A549 (cell line): ENCODE measurements at regions of chr12 and their contacts with region 1.

Region 1: DNA sequence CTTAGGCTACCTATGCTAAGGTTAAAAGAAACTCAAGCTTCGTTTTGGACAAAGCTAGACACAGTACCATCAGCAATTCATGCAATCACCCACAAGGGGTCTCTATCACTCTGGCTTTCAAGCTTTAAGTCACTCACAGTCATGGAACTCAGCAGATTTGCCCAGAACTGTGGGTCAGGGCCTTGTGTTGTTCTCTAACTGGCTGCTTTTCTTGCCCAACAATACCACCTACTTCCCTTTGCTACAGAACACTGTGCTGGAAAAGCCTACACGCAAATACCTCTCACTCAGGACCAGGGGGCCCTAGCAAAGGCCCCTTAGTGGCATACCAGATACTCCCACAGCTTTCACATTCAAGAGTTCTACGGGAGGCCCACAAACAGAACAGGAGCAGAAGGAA is 9.1 kb downstream of the NEMP1 start:
- DNase-seq: peak; percentile 48 to 86
- ATAC-seq: peak; percentile 99
- H3K4me3 ChIP-seq: no peak overlapping the region
- H3K27ac ChIP-seq: peak overlapping the region in 1 of 2 experiments; percentile 68; a peak in 3 of 6 replicates
- H3K4me1 ChIP-seq: 0 out of 3 replicates have a peak, but pooled peaks cover 4% of the 10 kb centered on the region
- CTCF ChIP-seq: peak; percentile 94
- EP300 ChIP-seq: no peak
- POLR2A ChIP-seq: no peak
- RAD21 ChIP-seq: peak; percentile 94 to 97

Region 2: DNA sequence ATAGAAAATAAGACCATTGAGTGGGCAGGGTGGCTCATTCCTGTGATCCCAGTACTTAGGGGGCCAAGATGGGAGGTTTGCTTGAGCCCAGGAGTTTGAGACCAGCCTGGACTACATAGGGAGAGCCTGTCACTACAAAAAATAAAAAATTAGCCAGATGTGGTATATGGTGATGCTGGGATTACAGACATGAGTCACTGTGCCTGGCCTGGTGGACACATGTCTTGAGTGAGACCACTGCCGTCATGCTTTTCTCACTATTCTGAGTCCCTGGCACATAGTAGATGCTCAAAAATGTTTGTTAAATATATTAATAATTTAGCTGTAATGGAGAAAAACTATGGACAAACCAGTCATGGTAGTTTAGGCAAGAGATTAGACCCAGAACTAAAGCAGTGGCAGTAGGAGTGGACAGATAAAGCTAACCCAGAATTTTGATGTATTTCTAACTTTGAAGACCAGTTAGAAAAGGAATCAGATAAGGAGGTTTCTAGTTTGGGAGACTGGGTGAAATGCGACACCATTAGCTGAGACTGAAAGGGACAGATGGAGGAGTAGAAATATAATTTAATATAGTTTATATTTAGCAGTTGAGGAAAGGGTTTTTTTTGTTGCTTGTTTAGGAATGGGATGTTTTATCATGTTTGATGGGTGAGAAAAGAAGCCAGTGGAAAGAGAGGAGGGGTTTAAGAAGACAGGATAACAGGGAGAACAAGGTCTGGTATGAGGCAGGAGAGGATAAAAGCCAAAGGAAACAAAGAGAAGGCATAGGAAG is 374.0 kb before region 1 on chr12:
- CTCF ChIA-PET with region 1: no interaction called
- POLR2A ChIA-PET with region 1: no interaction called
- DNase-seq: no peak
- ATAC-seq: no peak
- H3K4me3 ChIP-seq: no peak overlapping the region
- H3K27ac ChIP-seq: no peak overlapping the region; a peak in 1 of 6 replicates
- H3K4me1 ChIP-seq: no peaks in the 10 kb centered on the region
- CTCF ChIP-seq: no peak
- EP300 ChIP-seq: no peak
- POLR2A ChIP-seq: no peak
- RAD21 ChIP-seq: no peak

Region 3: GRCh38 chr12:56931474-56931978 is 138.0 kb before region 1 on chr12:
- CTCF ChIA-PET with region 1: no interaction called
- POLR2A ChIA-PET with region 1: no interaction called
- DNase-seq: peak in 1 of 2 experiments; percentile 55
- ATAC-seq: peak in 1 of 2 experiments; percentile 39; a peak in 1 of 6 replicates
- H3K4me3 ChIP-seq: no peak overlapping the region
- H3K27ac ChIP-seq: peak overlapping the region; percentile 16 to 37; a peak in 1 of 6 replicates
- H3K4me1 ChIP-seq: peaks cover 17% of the 10 kb centered on the region
- CTCF ChIP-seq: no peak
- EP300 ChIP-seq: no peak
- POLR2A ChIP-seq: no peak
- RAD21 ChIP-seq: no peak

Region 4: GRCh38 chr12:57031138-57031725 is 38.3 kb before region 1 on chr12:
- CTCF ChIA-PET with region 1: interaction called, 12 read pairs
- POLR2A ChIA-PET with region 1: no interaction called
- DNase-seq: peak in 1 of 2 experiments; percentile 35
- ATAC-seq: peak in 1 of 2 experiments; percentile 47; a peak in 3 of 6 replicates
- H3K4me3 ChIP-seq: no peak overlapping the region
- H3K27ac ChIP-seq: peak overlapping the region in 1 of 2 experiments; percentile 37; a peak in 2 of 6 replicates
- H3K4me1 ChIP-seq: peaks cover 6% of the 10 kb centered on the region; the same call in 2 of the 3 replicates
- CTCF ChIP-seq: no peak
- EP300 ChIP-seq: no peak
- POLR2A ChIP-seq: no peak
- RAD21 ChIP-seq: no peak

Region 5: DNA sequence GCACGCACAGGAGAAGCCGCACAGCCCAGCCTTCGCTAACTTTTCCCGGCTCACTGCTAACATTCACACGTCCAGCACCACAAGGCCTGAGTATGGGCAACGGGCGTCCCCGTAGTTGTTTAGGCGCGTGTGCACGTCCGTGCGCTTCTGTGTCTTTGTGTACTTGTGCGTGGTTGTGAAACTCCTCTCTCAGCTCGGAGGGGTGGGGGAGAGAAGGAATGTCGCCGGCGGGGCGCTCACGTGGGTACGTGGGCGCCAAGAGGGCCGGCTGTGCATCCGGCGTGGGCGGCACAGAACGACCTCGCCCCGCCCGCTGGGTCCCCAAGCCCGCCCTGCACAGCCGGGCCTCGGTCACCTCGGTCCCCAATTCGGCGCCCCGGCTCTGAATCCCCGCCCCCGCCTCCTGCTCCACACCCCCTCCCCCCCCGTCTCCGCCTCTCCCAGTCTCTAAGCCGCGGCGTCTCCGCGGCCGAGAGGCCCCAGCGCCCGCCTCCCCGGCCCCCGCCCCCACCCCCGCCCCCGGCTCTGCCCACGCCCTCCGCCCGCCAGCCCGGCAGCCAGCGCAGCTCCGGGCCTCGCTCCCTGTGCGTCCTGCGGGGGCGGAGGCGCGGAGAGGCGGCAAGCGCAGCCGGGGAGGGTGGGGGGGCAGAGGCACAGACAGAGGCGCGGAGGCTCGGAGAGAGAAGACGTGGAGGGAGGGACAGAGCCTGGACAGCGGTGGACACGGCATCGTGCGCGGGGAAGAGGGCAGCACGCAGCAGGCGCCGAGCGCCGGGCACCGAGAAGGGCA is 19.1 kb after region 1 on chr12 and contains the start of gene NAB2:
- CTCF ChIA-PET with region 1: interaction called, 152 read pairs
- POLR2A ChIA-PET with region 1: interaction called, 24 read pairs
- DNase-seq: peak; percentile 89 to 97
- ATAC-seq: peak; percentile 48 to 71
- H3K4me3 ChIP-seq: peak within 1 kb of the TSS; percentile 89
- H3K27ac ChIP-seq: peak within 1 kb of the TSS; percentile 96 to 100
- H3K4me1 ChIP-seq: peaks cover 19% of the 10 kb centered on the region
- CTCF ChIP-seq: no peak
- EP300 ChIP-seq: no peak
- POLR2A ChIP-seq: peak; percentile 67
- RAD21 ChIP-seq: no peak
- polyA plus RNA-seq, gene NAB2: 8.6 and 10.1 TPM in 2 replicates

Region 6: DNA sequence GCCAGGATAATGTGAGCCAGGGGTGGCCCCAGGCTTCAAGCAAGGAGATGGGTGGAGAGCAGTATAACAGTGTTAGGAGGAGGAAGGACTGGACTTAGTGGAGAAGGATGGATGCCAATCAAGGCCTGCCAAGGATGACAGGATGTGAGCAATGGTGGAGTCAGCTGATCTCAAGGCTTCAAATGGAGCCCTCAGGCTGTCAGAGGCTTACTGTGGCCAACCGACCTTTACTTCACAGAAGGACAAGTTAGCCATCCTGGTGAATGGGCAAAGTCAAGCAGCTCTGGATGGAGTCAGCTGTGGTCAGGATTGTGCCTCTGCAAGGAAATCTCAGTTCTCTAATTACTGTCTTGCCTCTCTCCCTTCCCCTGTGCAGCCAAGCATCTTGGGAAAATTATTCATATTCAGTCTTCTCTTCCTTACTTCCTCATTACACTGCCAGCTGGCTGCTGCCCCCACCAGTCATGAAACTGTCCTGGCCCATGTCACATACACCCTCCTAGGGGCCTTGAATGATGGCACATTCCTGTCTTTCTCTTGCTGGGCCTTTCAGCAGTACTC is 49.3 kb after region 1 on chr12:
- CTCF ChIA-PET with region 1: interaction called, 440 read pairs
- POLR2A ChIA-PET with region 1: no interaction called
- DNase-seq: no peak
- ATAC-seq: peak; percentile 24 to 41; a peak in 3 of 6 replicates
- H3K4me3 ChIP-seq: no peak overlapping the region
- H3K27ac ChIP-seq: peak overlapping the region in 1 of 2 experiments; percentile 24; a peak in 1 of 6 replicates
- H3K4me1 ChIP-seq: no peaks in the 10 kb centered on the region
- CTCF ChIP-seq: no peak
- EP300 ChIP-seq: no peak
- POLR2A ChIP-seq: no peak
- RAD21 ChIP-seq: no peak

Region 7: DNA sequence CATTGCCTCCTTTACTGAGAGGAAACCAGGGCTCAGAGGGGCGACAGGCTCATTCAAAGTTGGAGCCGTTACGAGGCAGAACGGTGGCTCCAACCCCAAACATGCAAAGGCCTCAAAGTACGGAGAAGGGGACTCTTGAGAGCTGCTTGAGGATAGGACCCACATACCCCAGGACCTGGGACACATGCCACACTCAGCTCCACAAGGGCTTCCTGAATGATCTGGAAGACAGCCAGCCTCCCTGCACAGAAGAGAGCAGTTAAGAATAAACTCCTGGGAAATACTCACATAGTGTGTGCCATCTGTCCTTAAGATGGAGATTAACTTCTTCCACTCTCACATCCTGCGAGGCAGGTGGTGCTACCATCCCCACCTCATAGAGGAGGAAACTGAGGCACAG is 120.5 kb after region 1 on chr12:
- CTCF ChIA-PET with region 1: interaction called, 13 read pairs
- POLR2A ChIA-PET with region 1: no interaction called
- DNase-seq: no peak
- ATAC-seq: no peak
- H3K4me3 ChIP-seq: no peak overlapping the region
- H3K27ac ChIP-seq: no peak overlapping the region
- H3K4me1 ChIP-seq: no peaks in the 10 kb centered on the region
- CTCF ChIP-seq: no peak
- EP300 ChIP-seq: no peak
- POLR2A ChIP-seq: no peak
- RAD21 ChIP-seq: no peak